ENCODE measurements at regions of chr6 and their contacts with region 1.

Region 1: GRCh38 chr6:70638468-70638867 is 29.2 kb upstream of the SMAP1 start:
- DNase-seq: no peak
- H3K27ac ChIP-seq: no peak overlapping the region
- CTCF ChIP-seq: no peak

Region 2: DNA sequence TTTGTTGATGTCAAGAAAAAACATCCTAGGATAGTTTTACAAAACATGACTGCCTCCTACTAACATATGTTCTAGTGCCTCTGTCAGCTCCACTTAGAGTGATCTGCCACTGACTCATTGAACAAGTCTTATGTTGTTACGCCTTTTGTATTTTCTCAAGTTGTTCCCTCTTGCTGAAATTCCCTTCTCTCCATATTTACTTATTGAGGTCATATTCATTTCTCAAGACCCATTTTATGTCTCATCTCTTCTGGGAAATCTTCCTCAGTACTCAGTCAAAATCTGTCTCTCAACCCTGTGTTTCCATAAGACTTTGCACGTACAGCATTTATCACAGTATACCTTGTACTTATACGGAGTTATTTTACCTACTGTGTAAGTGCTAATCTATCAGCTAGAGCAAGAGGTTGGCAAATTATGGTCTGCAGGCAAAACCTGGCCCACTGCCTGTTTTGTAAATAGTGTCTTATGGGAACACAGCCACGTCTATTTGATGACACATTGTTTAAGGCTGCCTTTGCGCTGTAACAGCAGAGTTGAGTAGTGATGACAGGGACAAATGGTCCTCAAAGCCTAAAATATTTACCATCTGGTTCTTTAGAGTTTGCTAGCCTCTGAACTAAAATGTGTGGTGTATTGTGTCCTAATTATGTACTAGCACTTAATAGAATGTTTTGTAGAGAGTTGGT is 1919.9 kb before region 1 on chr6:
- CTCF ChIA-PET with region 1: no interaction called
- POLR2A ChIA-PET with region 1: no interaction called
- DNase-seq: no peak
- H3K27ac ChIP-seq: no peak overlapping the region
- CTCF ChIP-seq: no peak

Region 3: DNA sequence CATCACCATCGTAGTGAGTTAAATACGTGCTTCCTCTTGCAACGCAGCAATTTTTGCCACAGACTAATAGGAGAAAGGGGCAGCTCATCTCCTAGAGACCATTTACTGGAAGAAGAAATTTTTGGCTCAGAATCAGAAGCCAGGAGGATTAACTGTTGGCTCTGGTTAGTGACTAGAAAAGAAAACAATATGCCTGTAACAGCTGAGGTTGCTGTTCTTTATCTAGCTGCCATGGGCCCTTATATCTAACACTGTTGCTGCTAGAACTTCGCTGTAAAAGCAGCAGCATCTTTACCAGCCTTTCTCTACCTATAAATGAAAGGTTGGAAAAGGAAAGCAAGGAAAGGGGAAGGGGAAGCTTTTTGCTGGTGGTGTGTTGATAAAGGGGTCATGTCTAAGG is 159.2 kb before region 1 on chr6:
- CTCF ChIA-PET with region 1: no interaction called
- POLR2A ChIA-PET with region 1: no interaction called
- DNase-seq: no peak
- H3K27ac ChIP-seq: no peak overlapping the region
- CTCF ChIP-seq: no peak

Region 4: DNA sequence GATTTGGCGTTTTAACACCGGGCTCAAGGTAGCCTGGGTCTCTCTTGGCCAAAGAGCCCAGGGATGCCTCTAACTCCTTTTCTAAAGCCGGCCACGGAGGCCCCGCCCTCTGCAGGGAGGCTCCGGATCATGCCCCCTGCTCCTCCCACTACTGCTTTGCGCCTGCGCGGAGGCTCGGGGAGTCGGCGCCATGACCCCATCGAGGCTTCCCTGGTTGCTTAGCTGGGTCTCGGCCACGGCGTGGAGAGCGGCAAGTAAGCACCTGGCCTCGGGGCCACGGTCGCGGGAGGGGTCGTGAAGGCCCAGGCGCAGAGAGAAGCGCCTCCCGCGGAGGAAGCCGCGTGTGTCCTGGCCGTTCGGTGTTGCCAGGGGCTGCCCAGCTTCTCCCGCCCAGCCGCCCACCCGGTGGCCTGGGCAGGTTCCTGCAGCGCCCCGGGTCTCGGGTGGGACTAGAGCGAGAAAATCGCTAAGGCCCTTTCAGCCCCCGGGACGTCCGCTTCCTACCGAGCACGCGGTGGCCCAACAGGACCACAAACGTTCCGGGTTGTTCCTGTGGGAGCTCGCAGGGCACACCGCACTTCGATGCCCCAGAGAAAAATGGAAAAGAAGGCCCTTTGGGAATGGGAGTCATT is 71.6 kb before region 1 on chr6 and contains the start of gene SDHAF4:
- CTCF ChIA-PET with region 1: interaction called, 13 read pairs
- POLR2A ChIA-PET with region 1: no interaction called
- DNase-seq: peak; percentile 97
- H3K27ac ChIP-seq: peak within 1 kb of the TSS; percentile 76
- CTCF ChIP-seq: no peak

Region 5: GRCh38 chr6:70590400-70590799 is 48.1 kb before region 1 on chr6:
- CTCF ChIA-PET with region 1: no interaction called
- POLR2A ChIA-PET with region 1: no interaction called
- DNase-seq: no peak
- H3K27ac ChIP-seq: no peak overlapping the region
- CTCF ChIP-seq: no peak